ENCODE measurements at regions of chr18 and their contacts with region 1.

Region 1: DNA sequence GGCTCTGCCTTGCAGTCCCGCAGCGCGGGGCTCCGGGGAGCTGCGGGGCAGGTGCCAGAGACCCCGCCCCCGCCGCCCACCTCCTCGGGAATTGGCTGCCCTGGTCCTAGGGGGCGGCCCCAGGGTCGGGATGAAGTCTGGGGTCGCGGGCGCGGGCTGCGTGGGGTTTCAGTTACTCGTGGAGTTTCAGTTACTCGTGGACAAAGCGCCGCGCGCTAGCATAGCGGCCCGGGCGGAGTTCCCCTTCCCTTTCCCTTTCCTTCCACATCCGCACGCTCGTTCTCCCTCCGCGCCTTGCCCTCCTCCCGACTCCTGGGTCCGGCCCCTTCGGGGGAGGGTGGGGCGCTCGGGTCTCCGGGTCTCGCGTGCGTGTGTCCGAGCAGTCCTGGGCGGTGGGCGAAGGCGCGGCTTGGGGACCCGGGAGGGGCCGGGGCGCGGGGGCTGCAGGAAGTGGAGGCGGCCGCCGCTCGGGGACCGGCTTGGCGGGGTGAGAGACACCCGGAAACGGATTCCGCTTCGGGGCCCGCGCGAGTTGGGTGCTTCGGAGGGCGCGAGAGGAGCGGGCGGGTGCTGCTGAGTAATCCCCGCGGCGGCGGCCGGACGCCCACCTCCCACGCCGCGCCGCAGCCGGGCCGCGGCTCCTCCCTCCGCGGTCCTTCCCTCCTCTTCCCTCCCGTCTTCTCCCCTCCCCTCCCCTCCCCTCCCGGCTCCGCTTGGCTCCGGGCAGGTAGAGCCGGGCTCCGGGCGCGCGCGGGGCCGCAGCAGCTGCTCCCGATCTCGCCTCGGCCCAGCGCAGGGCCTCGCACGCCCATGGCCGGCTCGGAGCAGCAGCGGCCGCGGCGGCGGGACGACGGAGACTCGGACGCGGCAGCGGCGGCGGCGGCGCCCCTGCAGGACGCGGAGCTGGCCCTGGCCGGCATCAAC is at the start of gene TTC39C:
- DNase-seq: peak; percentile 93
- ATAC-seq: peak; percentile 75
- H3K4me3 Mint-ChIP-seq: peak within 1 kb of the TSS; percentile 92
- H3K27ac Mint-ChIP-seq: peak within 1 kb of the TSS; percentile 88
- H3K4me1 Mint-ChIP-seq: peaks cover 72% of the 10 kb centered on the region
- H3K27me3 Mint-ChIP-seq: no peaks in the 10 kb centered on the region
- CTCF ChIP-seq: no peak
- total RNA-seq, gene TTC39C: 37.9 to 43.0 TPM

Region 2: GRCh38 chr18:23828426-23828825 is 185.9 kb before region 1 on chr18:
- CTCF ChIA-PET with region 1: no interaction called
- POLR2A ChIA-PET with region 1: no interaction called
- intact Hi-C with region 1: loop called (anchors 5 kb)
- DNase-seq: peak; percentile 64
- ATAC-seq: peak; percentile 97
- H3K4me3 Mint-ChIP-seq: no peak overlapping the region
- H3K27ac Mint-ChIP-seq: peak overlapping the region; percentile 65
- H3K4me1 Mint-ChIP-seq: peaks cover 40% of the 10 kb centered on the region
- H3K27me3 Mint-ChIP-seq: no peaks in the 10 kb centered on the region
- CTCF ChIP-seq: no peak

Region 3: GRCh38 chr18:23967321-23968089 is 46.8 kb before region 1 on chr18:
- CTCF ChIA-PET with region 1: interaction called, 6 read pairs
- POLR2A ChIA-PET with region 1: interaction called, 10 read pairs
- intact Hi-C with region 1: loop called (anchors 5 kb)
- DNase-seq: peak; percentile 59
- ATAC-seq: peak; percentile 41
- H3K4me3 Mint-ChIP-seq: no peak overlapping the region
- H3K27ac Mint-ChIP-seq: peak overlapping the region; percentile 14
- H3K4me1 Mint-ChIP-seq: peaks cover 74% of the 10 kb centered on the region
- H3K27me3 Mint-ChIP-seq: no peaks in the 10 kb centered on the region
- CTCF ChIP-seq: no peak

Region 4: GRCh38 chr18:24027156-24027827 is 13.0 kb after region 1 on chr18:
- CTCF ChIA-PET with region 1: interaction called, 3 read pairs
- POLR2A ChIA-PET with region 1: interaction called, 17 read pairs
- intact Hi-C with region 1: no loop called
- DNase-seq: no peak
- ATAC-seq: no peak
- H3K4me3 Mint-ChIP-seq: no peak overlapping the region
- H3K27ac Mint-ChIP-seq: no peak overlapping the region
- H3K4me1 Mint-ChIP-seq: peaks cover 81% of the 10 kb centered on the region
- H3K27me3 Mint-ChIP-seq: no peaks in the 10 kb centered on the region
- CTCF ChIP-seq: no peak

Region 5: GRCh38 chr18:24075731-24076130 is 61.4 kb after region 1 on chr18:
- CTCF ChIA-PET with region 1: interaction called, 4 read pairs
- POLR2A ChIA-PET with region 1: interaction called, 9 read pairs
- intact Hi-C with region 1: loop called (anchors 5 kb)
- DNase-seq: no peak
- ATAC-seq: peak; percentile 18
- H3K4me3 Mint-ChIP-seq: no peak overlapping the region
- H3K27ac Mint-ChIP-seq: peak overlapping the region; percentile 83
- H3K4me1 Mint-ChIP-seq: peaks cover 40% of the 10 kb centered on the region
- H3K27me3 Mint-ChIP-seq: no peaks in the 10 kb centered on the region
- CTCF ChIP-seq: no peak

Measured in activated CD8-positive, alpha-beta T cell treated with anti-CD3 and anti-CD28 coated beads for 36 hours (primary cell).